ENCODE measurements at regions of chr21 and their contacts with region 1.

Region 1: DNA sequence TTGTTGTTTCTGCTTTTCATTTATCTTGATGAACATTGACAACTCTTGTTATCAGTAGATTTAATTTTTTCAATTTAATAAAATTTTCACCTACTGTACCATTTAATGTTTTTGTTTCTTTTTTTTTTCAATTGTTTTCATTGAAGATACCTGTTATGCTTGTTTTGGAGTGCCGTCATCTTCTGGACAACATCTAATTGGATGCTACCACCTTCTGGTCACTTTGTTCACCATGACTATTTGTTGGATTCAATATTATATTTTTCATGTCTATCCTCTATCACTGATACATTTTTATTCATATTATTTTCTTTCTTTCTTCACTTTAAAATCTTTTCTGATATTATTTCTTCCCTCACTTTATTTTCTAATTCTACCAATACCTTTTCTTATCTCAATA is 14.0 kb downstream of the KRTAP21-2 start:
- DNase-seq: no peak

Region 2: DNA sequence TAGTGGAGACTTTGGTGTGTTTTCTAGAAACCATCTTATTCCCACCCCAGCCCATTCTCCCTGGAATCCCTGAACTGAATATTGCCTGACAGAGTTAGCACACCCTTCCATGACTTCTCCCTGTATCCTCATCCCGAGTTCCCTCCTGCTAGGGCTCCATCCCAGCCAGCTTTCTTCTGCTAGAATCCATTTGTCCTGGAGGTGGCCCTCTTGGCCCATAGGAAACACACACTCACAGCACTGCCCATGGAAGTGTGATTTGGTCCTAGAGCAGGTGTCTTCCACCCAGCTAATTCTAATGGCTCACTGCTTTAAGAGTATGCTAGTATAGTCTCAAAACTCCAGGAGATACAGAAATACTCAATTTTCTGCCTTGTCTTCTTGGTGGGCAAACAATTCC is 288.8 kb before region 1 on chr21:
- intact Hi-C with region 1: loop called (anchors 5 kb)
- DNase-seq: no peak

Region 3: GRCh38 chr21:30769724-30770431 is 36.9 kb after region 1 on chr21:
- intact Hi-C with region 1: no loop called
- DNase-seq: no peak

Region 4: GRCh38 chr21:31041295-31042079 is 308.5 kb after region 1 on chr21:
- intact Hi-C with region 1: no loop called
- DNase-seq: no peak